Activated CD4-positive, alpha-beta T cell treated with anti-CD3 and anti-CD28 coated beads for 36 hours (primary cell): ENCODE measurements at regions of chr15 and their contacts with region 1.

Region 1: DNA sequence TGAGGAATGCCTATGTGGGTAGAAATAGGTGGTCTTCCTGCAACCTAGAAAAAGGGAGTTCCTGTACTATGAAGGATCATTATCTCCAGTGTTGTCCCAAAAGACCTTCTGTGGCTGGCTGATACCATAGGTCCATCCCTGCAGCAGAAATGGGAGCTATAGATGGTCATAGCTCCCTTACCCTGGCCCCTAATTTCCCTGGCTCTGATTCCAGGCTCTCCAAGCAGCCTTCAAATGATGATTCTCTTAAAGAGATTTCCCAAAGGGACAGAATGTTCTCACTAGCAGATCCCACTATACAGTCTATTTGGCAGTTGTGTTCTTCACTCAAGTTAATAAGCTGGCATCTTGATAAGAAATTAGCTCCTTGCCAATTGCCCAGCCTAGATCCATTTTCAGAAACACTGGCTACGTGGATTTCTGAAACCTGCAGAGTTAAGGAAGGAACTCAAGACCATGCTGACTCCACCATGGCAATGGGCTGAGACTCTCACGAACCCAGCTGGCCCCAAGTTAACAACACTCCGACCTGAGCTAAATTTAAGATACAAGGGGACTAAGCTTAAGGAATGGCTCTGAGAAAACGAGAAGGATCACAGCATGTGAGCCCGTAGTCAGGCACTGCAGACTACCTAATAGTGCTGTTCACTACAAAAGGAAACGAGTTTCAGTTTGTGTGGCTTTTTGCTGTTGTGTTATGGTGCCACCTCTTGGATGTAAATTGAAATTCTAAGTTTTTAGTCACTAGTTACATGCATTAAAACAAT is 11.4 kb downstream of the C15orf40 start:
- DNase-seq: peak; percentile 41
- ATAC-seq: peak; percentile 89
- H3K4me3 Mint-ChIP-seq: peak overlapping the region; percentile 53
- H3K27ac Mint-ChIP-seq: peak overlapping the region; percentile 63
- H3K4me1 Mint-ChIP-seq: peaks cover 6% of the 10 kb centered on the region
- H3K27me3 Mint-ChIP-seq: no peaks in the 10 kb centered on the region

Region 2: DNA sequence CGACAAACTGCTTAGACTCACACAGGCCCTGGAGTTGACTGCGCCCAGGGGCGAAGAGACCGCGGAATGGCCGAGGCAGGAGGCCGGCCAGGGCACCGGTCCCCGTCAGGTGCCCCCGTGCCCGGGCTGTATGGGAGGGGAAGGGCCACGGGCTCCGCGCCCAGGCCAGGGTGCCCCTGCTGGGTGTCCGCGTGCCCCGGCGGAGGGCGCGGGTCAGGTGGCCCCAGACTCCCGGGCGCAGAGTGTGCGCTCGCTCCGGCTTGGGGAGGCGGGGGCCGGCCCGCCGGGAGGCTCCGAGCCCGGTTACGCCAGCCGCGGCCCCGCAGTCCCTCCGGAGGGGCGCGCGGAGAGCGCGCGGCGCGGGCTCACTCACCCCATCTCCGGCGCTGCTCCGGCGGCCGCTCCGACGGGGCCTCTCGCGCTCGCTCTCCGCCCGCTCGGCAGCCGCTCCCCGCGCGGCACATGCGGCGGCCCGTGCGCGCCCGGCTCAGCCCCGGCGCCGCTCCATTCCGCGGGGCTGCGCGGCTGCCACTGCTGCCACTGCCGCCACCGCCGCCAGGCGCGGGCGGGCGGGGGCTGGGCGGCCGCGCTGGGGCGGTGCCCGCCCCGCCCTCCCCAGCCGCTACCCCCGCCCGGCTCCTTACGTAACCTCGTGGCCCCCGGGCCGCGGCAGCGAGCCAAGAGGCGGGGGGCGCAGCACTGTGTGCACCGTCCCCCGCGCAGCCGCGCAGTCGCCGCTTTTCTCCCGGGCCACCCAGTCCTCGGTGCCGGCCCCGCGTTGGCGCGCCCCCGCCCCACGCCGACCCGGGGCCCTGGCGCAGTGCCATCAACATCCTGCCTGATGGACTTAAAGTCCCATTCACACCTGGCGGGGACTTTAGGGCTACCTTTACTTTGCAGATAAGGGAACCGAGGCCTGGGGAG is 47.7 kb before region 1 on chr15 and contains the start of gene HOMER2:
- CTCF ChIA-PET with region 1: interaction called, 4 read pairs
- POLR2A ChIA-PET with region 1: no interaction called
- intact Hi-C with region 1: loop called in 1 of 2 experiments (anchors 5 kb)
- DNase-seq: peak; percentile 35
- ATAC-seq: peak; percentile 57
- H3K4me3 Mint-ChIP-seq: peak within 1 kb of the TSS; percentile 67
- H3K27ac Mint-ChIP-seq: peak within 1 kb of the TSS; percentile 65
- H3K4me1 Mint-ChIP-seq: peaks cover 2% of the 10 kb centered on the region
- H3K27me3 Mint-ChIP-seq: peaks cover 9% of the 10 kb centered on the region
- total RNA-seq, gene HOMER2: 3.5 to 4.6 TPM